ENCODE measurements at regions of chr19 and their contacts with region 1.

Region 1: DNA sequence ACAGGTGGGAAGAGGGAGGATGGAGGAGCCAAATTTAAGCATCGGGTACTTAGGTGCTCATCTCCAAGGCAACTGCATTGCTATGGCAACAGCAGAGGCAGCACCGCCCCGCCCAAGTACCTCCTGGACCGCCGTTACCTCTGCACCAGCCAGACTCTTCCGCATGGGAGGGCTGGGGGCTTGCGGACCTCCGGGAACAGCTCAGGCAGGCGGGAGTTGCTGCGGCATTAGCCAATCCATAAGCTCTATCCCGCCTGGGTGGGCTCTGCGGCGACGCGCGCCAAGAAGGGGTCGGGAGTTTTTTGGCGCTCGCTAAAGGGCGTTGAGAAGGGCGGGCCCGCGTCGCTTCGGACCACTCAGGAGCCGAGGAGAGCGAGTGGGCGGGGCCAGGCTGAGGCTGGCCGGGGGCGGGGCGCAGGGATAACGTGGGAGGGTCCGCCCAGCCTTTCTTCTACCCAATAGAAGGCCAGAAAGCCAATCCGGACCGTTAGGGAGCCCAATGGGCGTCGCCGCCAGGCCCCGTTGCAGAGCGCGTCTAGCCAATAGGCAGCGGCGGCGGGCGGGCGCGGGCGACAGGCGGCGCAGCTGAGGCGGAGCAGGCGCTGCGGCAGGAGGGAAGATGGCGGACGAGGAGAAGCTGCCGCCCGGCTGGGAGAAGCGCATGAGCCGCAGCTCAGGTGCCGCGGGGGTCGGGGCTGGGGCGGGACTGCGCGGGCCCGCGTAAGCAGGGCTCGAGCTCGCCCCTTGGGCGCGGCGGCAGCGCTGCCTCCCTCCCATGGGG is at the start of gene PIN1:
- DNase-seq: peak; percentile 99
- ATAC-seq: peak; percentile 98
- H3K4me3 Mint-ChIP-seq: peak within 1 kb of the TSS; percentile 94
- H3K27ac Mint-ChIP-seq: peak within 1 kb of the TSS; percentile 84
- H3K4me1 Mint-ChIP-seq: peaks cover 13% of the 10 kb centered on the region
- H3K27me3 Mint-ChIP-seq: no peaks in the 10 kb centered on the region
- total RNA-seq, gene PIN1: 95.1 to 101 TPM

Region 2: DNA sequence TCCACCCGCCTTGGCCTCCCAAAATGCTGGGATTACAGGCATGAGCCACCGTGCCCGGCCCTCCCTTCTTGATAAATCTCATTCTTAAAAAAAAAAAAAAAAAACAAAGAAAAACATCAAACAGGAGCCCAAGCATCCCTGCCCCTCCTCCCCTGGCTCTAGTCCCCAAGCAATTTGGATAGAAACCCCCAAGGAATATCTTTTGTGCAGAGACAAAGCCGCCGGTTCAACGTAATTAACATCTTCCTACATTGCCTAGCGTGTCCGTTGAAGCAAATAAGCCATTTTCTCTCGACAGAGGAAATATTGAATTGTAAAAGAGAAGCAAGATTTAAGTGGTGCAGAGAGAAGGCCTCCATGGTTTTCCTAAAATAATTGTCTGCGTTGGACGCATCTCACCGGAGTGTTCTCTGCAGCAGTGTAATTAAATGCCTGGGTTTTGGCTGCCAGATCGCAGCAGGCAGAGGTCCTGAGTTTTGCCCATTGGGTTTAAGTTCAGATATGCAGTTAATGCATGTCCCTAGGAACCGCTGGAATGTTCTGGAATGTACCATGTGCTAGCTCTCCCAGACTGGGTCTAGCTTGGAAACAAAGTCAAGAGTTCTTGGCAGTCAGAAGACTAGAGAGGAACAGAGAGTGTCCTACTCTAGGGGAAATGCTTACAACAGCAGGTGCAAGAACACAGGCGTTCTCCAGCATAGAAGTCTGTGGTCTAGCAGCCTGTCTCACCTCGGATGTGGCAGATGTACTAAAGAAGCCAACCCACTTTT is 31.0 kb after region 1 on chr19:
- POLR2A ChIA-PET with region 1: interaction called, 12 read pairs
- DNase-seq: no peak
- ATAC-seq: peak; percentile 77
- H3K4me3 Mint-ChIP-seq: peak overlapping the region; percentile 77
- H3K27ac Mint-ChIP-seq: peak overlapping the region; percentile 84
- H3K4me1 Mint-ChIP-seq: peaks cover 49% of the 10 kb centered on the region
- H3K27me3 Mint-ChIP-seq: no peaks in the 10 kb centered on the region